Heart left ventricle (tissue), 16 donors: ENCODE measurements at regions of chr2 and their contacts with region 1.

Region 1: GRCh38 chr2:143442193-143442592 is 313.0 kb downstream of the ARHGAP15 start:
- DNase-seq: no peak
- ATAC-seq: peak in 1 of 4 donors; percentile 41
- H3K4me3 ChIP-seq: peak overlapping the region in 3 of 12 donors; percentile 9 to 14 (median 11)
- H3K27ac ChIP-seq: peak overlapping the region in 11 of 12 donors; percentile 30 to 72 (median 44)
- H3K4me1 ChIP-seq: peaks cover 0 to 5% (median 0%) of the 10 kb centered on the region in 12 donors
- H3K27me3 ChIP-seq: no peaks in the 10 kb centered on the region
- CTCF ChIP-seq: no peak
- POLR2A ChIP-seq: no peak

Region 2: DNA sequence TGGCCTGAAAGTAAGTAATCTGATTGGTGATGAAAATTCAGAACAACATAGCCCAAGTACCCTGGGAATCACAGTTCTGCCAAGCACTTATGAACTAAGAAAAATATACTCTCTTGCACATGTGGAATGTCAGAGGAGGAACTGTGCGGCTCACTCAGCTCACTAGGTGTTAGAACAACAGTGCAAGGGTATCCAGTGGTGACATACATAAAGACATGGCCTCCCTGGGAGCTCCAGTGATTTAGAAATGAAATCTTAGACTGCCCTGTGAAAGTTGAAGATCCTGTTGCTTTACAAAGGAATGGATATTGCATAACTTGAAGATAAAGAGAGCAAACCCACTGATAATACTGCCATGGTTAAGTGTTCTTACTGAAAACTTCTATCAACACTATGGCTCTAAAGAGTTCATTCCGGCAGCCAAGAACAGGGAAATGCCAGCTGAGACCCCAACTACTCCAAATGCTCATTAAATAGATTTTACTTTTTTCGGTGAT is 66.8 kb before region 1 on chr2:
- intact Hi-C with region 1: no loop called
- DNase-seq: no peak
- ATAC-seq: no peak
- H3K4me3 ChIP-seq: no peak overlapping the region
- H3K27ac ChIP-seq: no peak overlapping the region
- H3K4me1 ChIP-seq: no peaks in the 10 kb centered on the region
- H3K27me3 ChIP-seq: no peaks in the 10 kb centered on the region
- CTCF ChIP-seq: no peak
- POLR2A ChIP-seq: no peak

Region 3: GRCh38 chr2:143482316-143482715 is 40.1 kb after region 1 on chr2:
- intact Hi-C with region 1: loop called in 1 of 10 experiments (anchors 5 kb)
- DNase-seq: peak in 1 of 5 donors; percentile 14
- ATAC-seq: peak in 3 of 4 donors; percentile 55 to 83 (median 77)
- H3K4me3 ChIP-seq: no peak overlapping the region
- H3K27ac ChIP-seq: peak overlapping the region; percentile 30 to 90 (median 75)
- H3K4me1 ChIP-seq: peaks cover 0 to 28% (median 6%) of the 10 kb centered on the region in 12 donors
- H3K27me3 ChIP-seq: no peaks in the 10 kb centered on the region
- CTCF ChIP-seq: no peak
- POLR2A ChIP-seq: no peak

Region 4: DNA sequence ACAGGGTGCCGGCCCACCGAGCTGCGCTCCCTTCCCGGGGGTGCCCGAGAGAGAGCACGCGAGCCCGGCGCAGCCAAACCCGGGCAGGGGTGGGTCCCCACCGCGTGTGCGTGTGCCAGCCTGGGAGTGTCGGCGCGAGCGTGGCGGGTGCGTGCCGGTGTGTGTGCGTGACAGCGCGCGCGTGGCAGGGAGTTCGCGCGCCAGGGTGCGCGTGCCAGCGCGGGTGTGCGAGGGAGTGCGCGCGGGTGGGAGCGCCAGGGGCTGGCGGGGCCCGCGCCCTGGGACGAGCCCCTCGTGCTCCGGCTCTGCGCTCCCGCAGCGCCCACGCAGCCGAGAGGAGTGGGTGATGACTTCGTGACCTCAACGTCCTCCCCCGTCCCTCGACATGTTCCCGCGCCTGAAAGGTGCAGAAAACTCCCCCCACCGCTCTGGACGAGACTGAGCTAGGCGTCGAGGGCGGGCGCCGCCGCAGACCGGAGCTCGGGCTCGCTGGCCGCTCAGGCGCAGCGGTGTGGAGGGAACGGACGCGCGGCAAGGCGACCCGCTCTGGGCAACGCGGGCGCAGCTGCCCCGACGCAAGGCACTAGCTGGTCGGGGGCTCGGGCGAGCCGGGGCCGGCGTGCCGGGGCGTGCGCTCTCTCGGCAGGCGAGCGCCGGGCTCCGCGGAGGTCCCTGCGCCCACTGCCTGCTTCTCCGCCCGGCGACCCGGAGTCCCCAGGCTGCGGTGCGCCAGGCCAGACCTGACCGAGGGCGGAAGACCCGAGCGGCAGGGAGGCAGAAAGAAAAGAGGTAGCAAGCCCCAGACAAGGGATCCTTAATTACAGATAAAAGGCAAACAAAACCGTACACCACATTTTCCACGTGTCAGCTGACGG is 494.9 kb after region 1 on chr2:
- intact Hi-C with region 1: loop called in 1 of 10 experiments (anchors 10 kb)
- DNase-seq: peak; percentile 22 to 70 (median 38)
- ATAC-seq: peak in 3 of 4 donors; percentile 56 to 87 (median 83)
- H3K4me3 ChIP-seq: peak overlapping the region; percentile 40 to 68 (median 60)
- H3K27ac ChIP-seq: peak overlapping the region in 11 of 12 donors; percentile 11 to 80 (median 48)
- H3K4me1 ChIP-seq: peaks cover 0 to 17% (median 4%) of the 10 kb centered on the region in 12 donors
- H3K27me3 ChIP-seq: peaks cover 0 to 24% (median 0%) of the 10 kb centered on the region in 9 donors
- CTCF ChIP-seq: no peak
- POLR2A ChIP-seq: no peak